GM18951 (cell line): ENCODE measurements at regions of chr1 and their contacts with region 1.

Region 1: DNA sequence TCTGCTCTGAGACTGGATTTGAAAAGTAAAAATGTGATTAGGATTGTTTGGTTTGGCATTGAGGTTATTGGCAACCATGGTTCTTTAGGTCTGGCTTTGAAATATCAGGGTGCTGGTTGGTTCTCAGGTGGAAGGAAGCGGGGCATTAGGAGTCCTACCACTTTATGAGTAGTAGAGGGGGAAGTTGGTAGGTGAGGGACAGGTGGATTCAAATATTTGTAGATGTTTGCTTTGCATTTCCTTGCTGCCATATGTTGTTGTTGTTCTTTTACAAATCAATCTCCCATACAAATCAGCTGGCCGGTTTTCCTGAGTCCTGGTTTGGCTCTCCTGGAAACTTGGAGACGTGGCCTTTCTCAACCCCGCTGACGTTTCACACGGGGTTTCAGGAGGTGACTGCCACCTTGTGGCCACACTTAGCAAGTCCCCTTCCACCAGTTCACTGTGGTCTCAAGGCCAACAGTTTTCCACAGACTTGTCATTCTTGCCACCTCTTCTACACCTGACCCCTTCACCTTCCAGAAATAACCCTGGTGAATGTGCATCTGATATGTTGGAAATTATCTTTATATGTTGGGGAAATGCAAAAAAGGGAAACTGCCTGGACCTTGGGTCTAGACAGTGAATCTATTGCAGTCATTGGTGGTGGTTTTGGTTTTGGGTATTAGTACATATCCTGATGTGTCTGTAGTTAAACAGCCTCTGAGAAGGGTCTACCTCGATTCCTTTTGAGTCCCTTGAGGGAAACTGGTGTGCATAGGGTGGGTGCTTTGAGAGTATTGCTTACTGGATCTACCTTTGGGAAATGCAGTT is 127.0 kb upstream of the KIAA0040 start:
- POLR2A ChIP-seq: no peak

Region 2: DNA sequence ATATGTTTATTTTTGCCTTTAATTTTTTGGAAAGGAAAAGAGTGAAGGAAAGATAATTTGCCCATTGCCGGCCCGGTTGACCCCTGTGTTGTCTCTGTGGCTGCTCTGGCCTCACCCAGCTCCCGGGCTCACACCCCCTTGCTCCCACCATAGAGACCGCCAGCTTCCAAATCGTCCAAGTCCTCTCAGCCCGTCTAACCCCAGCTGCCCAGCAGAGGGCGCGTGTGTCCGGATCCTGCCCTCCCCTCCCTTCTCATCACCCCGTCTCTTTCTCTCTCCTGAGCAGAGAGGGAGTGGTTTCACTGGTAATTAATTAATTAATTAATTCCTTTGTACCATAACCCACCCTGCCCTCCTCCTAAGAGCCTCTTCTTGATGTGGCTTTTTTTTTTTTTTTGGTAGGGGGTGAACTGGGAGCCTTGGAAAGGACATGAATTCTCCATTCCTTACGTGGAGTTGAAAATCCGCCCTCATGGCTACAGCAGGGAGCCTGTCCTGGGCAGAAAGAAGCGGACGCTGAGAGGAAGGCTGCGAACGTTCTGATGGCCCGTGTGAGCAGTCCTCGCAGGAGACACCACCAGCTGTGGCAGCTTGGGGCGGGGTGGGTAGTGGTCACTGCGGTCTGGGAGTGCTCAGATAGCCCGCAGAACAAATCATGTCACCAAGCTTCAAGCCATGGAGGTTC is 173.0 kb before region 1 on chr1:
- in situ Hi-C with region 1: loop called (anchors 5 kb)
- POLR2A ChIP-seq: no peak